ENCODE measurements at regions of chr1 and their contacts with region 1.

Region 1: DNA sequence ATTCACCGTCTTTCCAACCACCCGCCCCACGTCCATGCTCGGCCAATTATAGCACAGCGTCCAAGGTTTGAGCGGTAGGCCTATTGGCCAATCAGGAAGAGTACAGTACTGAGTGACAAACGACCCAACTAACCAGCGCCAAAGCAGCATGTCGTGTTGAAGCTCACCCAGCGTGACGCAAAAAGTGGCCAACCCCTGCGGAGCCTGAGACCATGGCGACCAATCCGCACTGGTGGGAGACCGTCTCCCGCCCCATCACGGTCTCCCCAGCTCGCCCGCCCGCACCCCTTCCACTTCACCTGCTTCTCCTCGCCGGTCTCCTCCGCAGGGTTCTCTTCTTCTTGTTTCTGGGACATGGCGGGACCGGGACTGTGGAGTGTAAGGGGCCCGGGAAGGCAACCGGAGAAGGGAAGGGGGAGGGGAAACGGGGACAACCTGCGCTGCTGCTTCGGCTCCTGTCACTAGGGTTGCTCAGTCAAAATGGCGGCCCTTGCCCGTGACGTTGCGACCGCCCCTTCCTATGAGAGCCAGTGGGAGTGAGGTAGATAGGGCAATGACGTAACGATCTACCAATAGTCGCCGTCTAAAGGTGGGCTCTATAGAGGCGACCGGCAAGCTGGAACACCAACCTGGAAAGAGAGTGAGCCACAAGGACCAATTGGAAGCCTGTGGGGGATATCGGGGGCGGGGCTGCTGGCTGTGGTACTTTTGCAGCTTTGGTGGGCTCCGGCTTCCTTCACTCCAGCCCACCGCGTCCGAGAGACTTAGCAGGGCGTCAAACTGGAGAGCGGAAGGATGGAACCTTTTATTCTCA is at the start of gene ENSA:
- DNase-seq: peak; percentile 92 to 99 (median 98)

Region 2: DNA sequence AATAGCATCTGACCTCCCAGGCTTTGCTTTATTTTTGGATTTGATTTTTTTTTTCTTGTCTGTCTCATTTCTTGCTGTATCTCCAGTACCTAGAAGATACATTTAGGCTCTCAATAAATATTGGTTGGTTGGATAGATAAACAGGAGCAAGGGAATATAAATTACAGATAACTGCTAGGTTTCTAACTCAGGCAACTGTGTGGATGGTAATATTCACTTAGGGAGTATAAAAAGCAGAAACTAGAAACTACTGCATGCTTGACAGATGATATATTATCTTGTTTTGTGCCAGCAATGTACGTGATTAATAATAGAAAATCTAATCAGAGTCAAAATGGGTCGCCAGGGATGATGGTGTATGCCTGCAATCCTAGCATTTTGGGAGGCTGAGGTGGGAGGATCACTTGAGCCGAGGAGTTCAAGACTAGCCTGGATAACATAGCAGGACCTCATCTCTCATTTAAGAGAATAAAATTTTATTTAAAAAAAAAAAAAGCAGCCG is 173.1 kb before region 1 on chr1:
- intact Hi-C with region 1: no loop called
- DNase-seq: no peak

Region 3: DNA sequence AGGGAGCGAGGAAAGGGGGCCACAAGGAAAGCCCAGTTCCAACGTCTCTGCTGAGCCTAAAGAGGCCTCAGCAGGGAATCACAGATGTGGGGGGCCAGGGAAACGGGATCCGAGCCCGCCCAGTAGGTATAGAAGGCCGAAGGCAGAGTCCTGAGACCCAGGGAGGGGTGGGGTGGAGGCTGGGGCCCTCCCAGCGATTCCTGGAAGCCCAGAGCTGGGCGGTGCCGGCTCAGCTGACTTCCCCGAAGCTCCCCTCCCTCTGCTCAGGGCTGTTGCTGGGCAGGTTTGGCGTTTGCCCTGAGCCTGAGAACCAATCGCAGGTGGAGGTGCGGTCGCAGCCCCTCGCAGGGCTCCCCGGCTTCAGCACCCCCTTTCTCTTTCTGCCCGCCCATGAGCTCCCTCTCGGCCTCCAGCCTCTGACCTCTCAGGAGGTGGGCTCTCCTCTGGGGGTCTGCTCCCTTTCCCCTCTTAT is 67.3 kb before region 1 on chr1:
- intact Hi-C with region 1: loop called (anchors 5 kb)
- DNase-seq: peak; percentile 51 to 90 (median 76)

Region 4: GRCh38 chr1:150578965-150579798 is 50.1 kb before region 1 on chr1 and contains the start of gene MCL1:
- intact Hi-C with region 1: loop called (anchors 5 kb)
- DNase-seq: peak; percentile 76 to 97 (median 92)